Ascending aorta (tissue), 2 donors: ENCODE measurements at regions of chr6 and their contacts with region 1.

Region 1: GRCh38 chr6:12545619-12546409 is 170.8 kb upstream of the PHACTR1 start:
- DNase-seq: no peak
- H3K4me3 ChIP-seq: no peak overlapping the region
- H3K27ac ChIP-seq: peak overlapping the region; percentile 15 to 59
- H3K4me1 ChIP-seq: peaks cover 4 to 28% of the 10 kb centered on the region in 2 donors
- H3K27me3 ChIP-seq: no peaks in the 10 kb centered on the region
- CTCF ChIP-seq: no peak

Region 2: DNA sequence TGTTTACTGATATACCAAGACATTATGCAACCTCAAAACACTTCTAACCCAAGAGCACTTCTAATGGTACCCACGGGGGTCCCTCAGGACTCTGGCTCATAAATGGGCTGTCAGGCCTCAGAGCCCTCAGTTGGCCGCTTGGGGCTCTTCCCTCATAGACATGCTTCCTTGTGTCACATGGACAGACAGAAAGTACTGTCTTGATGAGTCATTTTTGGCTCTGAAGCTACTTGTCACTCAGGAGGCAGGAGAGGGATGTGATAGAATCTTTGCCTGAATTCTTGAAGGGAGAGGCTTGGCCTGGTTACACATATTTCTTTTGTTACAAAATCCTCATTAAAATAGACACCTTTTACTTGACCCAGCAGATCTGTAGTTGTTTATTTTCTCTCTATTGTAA is 270.7 kb before region 1 on chr6:
- intact Hi-C with region 1: no loop called
- DNase-seq: no peak
- H3K4me3 ChIP-seq: no peak overlapping the region
- H3K27ac ChIP-seq: no peak overlapping the region
- H3K4me1 ChIP-seq: no peaks in the 10 kb centered on the region
- H3K27me3 ChIP-seq: no peaks in the 10 kb centered on the region
- CTCF ChIP-seq: no peak

Region 3: GRCh38 chr6:12348530-12349511 is 197.0 kb before region 1 on chr6:
- intact Hi-C with region 1: loop called (anchors 5 kb)
- DNase-seq: peak in 1 of 2 donors; percentile 72
- H3K4me3 ChIP-seq: no peak overlapping the region
- H3K27ac ChIP-seq: peak overlapping the region; percentile 81 to 87
- H3K4me1 ChIP-seq: peaks cover 4 to 40% of the 10 kb centered on the region in 2 donors
- H3K27me3 ChIP-seq: no peaks in the 10 kb centered on the region
- CTCF ChIP-seq: no peak

Region 4: DNA sequence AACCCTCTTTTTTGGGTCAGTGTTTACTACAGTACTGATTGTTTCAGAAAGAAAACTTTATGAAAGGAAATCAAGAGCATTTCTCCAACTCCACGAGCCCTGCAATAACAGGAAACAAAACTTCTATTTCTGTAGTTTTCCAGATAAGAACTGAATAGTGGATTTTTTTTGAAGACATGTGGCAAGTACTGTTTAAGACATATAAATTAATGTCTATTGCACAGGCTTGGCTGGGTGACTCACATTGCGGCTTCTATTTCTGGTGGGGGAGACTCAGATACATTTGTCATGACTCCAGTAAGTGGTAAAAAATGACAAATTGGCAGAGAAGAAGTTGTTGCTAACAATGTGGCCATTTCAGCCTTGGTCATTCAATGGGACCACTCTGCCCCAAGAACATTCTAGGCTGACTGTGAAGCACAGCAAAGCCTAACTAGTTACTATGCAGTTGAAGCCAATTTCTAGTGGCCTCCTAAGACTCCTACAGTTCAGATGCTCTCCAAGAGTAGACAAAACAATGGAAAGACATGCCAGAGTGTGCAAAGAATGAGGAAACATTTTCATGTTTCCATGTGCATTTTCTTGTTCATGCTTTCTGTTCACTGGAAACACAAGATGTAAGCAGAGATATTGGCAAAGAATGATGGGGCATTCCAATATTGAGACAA is 54.8 kb before region 1 on chr6:
- intact Hi-C with region 1: loop called (anchors 5 kb)
- DNase-seq: peak in 1 of 2 donors; percentile 84
- H3K4me3 ChIP-seq: no peak overlapping the region
- H3K27ac ChIP-seq: peak overlapping the region; percentile 67 to 74
- H3K4me1 ChIP-seq: peaks cover 0 to 11% of the 10 kb centered on the region in 2 donors
- H3K27me3 ChIP-seq: no peaks in the 10 kb centered on the region
- CTCF ChIP-seq: no peak

Region 5: DNA sequence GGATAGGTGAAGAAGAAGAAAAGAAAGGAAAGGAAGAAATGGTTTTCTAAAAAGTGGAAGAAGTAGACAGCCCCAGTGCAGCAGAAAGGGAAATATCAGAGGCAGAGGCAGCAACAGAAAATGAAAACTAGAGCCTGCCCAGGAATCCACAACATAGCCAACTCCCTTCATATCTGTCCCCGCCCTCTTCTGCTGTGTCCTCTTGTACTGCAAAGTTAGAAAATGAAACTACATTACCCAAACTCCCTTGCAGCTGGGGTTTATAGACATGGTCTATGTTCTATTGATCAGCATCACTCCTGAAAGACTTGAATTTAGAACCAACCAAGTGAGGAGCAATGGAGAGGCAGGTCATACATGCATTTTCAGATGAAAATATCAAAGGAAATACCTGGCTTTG is 29.7 kb before region 1 on chr6:
- intact Hi-C with region 1: no loop called
- DNase-seq: no peak
- H3K4me3 ChIP-seq: no peak overlapping the region
- H3K27ac ChIP-seq: no peak overlapping the region
- H3K4me1 ChIP-seq: no peaks in the 10 kb centered on the region
- H3K27me3 ChIP-seq: no peaks in the 10 kb centered on the region
- CTCF ChIP-seq: no peak

Region 6: GRCh38 chr6:12592634-12593033 is 46.8 kb after region 1 on chr6:
- intact Hi-C with region 1: no loop called
- DNase-seq: no peak
- H3K4me3 ChIP-seq: no peak overlapping the region
- H3K27ac ChIP-seq: no peak overlapping the region
- H3K4me1 ChIP-seq: peaks cover 0 to 8% of the 10 kb centered on the region in 2 donors
- H3K27me3 ChIP-seq: no peaks in the 10 kb centered on the region
- CTCF ChIP-seq: no peak